ENCODE measurements at regions of chr15 and their contacts with region 1.

Region 1: GRCh38 chr15:60819860-60820259 is 340.9 kb upstream of the ICE2 start:
- DNase-seq: peak in 2 of 5 donors; percentile 30 to 45
- H3K4me3 ChIP-seq: no peak overlapping the region
- H3K4me3 Mint-ChIP-seq: peak overlapping the region; percentile 58 to 85 (median 77)
- H3K27ac ChIP-seq: peak overlapping the region; percentile 41
- H3K27ac Mint-ChIP-seq: peak overlapping the region; percentile 83 to 98 (median 96)
- H3K4me1 ChIP-seq: peaks cover 59% of the 10 kb centered on the region
- H3K4me1 Mint-ChIP-seq: peaks cover 41 to 71% (median 54%) of the 10 kb centered on the region in 4 donors
- H3K27me3 ChIP-seq: no peaks in the 10 kb centered on the region
- H3K27me3 Mint-ChIP-seq: no peaks in the 10 kb centered on the region

Region 2: DNA sequence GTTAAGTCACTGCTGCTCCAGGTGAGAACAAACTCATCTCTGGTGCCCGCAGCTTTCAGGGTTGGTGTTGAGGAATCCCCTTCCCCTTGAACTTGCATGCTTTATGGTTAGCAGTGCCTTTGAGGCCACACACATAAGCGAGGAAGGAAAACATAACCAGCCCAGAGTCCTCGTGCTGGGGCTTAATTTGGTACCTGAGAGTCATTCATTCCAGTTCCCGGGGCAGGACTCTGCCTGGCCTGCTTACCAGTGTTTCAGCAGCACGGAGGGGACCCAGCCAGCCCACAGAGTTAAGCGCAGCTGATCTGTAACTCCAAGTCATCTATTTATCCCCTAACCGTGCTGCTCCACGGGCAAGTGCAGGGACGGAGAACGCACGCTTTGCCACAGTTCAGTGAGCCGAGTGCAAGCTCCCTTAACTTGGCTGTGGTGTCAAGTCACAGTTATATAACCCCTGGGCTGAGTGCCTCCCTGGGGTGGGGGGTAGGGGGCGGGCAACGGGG is 38.6 kb before region 1 on chr15:
- CTCF ChIA-PET with region 1: no interaction called
- POLR2A ChIA-PET with region 1: no interaction called
- intact Hi-C with region 1: no loop called
- DNase-seq: peak in 1 of 5 donors; percentile 14
- H3K4me3 ChIP-seq: no peak overlapping the region
- H3K4me3 Mint-ChIP-seq: peak overlapping the region in 6 of 8 donors; percentile 9 to 73 (median 36)
- H3K27ac ChIP-seq: peak overlapping the region; percentile 14
- H3K27ac Mint-ChIP-seq: peak overlapping the region in 5 of 7 donors; percentile 8 to 91 (median 68)
- H3K4me1 ChIP-seq: peaks cover 45% of the 10 kb centered on the region
- H3K4me1 Mint-ChIP-seq: peaks cover 25 to 48% (median 45%) of the 10 kb centered on the region in 4 donors
- H3K27me3 ChIP-seq: no peaks in the 10 kb centered on the region
- H3K27me3 Mint-ChIP-seq: no peaks in the 10 kb centered on the region

Region 3: GRCh38 chr15:60804986-60805949 is 14.6 kb before region 1 on chr15:
- CTCF ChIA-PET with region 1: interaction called, 3 read pairs
- POLR2A ChIA-PET with region 1: interaction called, 19 read pairs
- intact Hi-C with region 1: no loop called
- DNase-seq: no peak
- H3K4me3 ChIP-seq: no peak overlapping the region
- H3K4me3 Mint-ChIP-seq: peak overlapping the region in 7 of 8 donors; percentile 26 to 77 (median 69)
- H3K27ac ChIP-seq: peak overlapping the region; percentile 29
- H3K27ac Mint-ChIP-seq: peak overlapping the region; percentile 71 to 94 (median 91)
- H3K4me1 ChIP-seq: peaks cover 95% of the 10 kb centered on the region
- H3K4me1 Mint-ChIP-seq: peaks cover 68 to 96% (median 84%) of the 10 kb centered on the region in 4 donors
- H3K27me3 ChIP-seq: no peaks in the 10 kb centered on the region
- H3K27me3 Mint-ChIP-seq: no peaks in the 10 kb centered on the region

Region 4: GRCh38 chr15:60883691-60884640 is 64.1 kb after region 1 on chr15:
- CTCF ChIA-PET with region 1: no interaction called
- POLR2A ChIA-PET with region 1: no interaction called
- intact Hi-C with region 1: no loop called
- DNase-seq: no peak
- H3K4me3 ChIP-seq: no peak overlapping the region
- H3K4me3 Mint-ChIP-seq: no peak overlapping the region
- H3K27ac ChIP-seq: no peak overlapping the region
- H3K27ac Mint-ChIP-seq: no peak overlapping the region
- H3K4me1 ChIP-seq: no peaks in the 10 kb centered on the region
- H3K4me1 Mint-ChIP-seq: peaks cover 0 to 2% (median 0%) of the 10 kb centered on the region in 4 donors
- H3K27me3 ChIP-seq: no peaks in the 10 kb centered on the region
- H3K27me3 Mint-ChIP-seq: peaks cover 0 to 3% of the 10 kb centered on the region in 2 donors

Region 5: GRCh38 chr15:61421938-61422337 is 602.1 kb after region 1 on chr15:
- CTCF ChIA-PET with region 1: no interaction called
- POLR2A ChIA-PET with region 1: no interaction called
- intact Hi-C with region 1: no loop called
- DNase-seq: no peak
- H3K4me3 ChIP-seq: no peak overlapping the region
- H3K4me3 Mint-ChIP-seq: no peak overlapping the region
- H3K27ac ChIP-seq: no peak overlapping the region
- H3K27ac Mint-ChIP-seq: no peak overlapping the region
- H3K4me1 ChIP-seq: no peaks in the 10 kb centered on the region
- H3K4me1 Mint-ChIP-seq: no peaks in the 10 kb centered on the region
- H3K27me3 ChIP-seq: no peaks in the 10 kb centered on the region
- H3K27me3 Mint-ChIP-seq: peaks cover 2 to 7% of the 10 kb centered on the region in 2 donors